ENCODE measurements at regions of chr16 and their contacts with region 1.

Region 1: DNA sequence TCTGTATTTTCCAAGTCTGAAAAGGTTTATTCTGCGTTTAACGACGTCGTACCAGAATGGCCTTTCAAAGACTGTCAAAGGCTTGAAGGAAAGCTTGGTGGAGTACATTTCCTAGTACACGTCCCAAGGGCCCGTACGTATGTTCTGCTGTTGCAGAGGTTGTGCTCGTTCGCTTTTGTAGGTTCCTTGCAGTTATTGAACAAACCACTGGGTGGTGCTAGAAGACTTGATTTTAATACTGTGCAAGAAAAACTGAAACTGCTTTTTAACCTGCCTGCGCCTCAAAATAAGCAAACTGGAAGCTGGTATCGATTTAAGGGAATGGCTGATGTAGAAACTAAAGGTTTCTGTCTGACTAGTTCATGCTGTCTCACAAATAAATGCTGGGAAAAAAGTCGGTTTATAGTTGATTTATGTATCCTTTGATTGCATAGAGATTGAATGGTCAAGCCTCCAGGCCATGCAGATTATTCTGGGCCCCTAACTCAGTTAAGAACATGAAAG is 54.6 kb downstream of the USP10 start:
- DNase-seq: peak; percentile 84
- H3K4me3 ChIP-seq: peak overlapping the region in 2 of 3 experiments; percentile 6 to 34
- H3K27ac ChIP-seq: peak overlapping the region; percentile 85
- H3K4me1 ChIP-seq: peaks cover 35% of the 10 kb centered on the region
- H3K27me3 ChIP-seq: no peaks in the 10 kb centered on the region
- CTCF ChIP-seq: peak; percentile 77 to 80

Region 2: GRCh38 chr16:84925092-84925772 is 170.8 kb after region 1 on chr16:
- CTCF ChIA-PET with region 1: no interaction called
- dilution Hi-C with region 1: no loop called
- in situ Hi-C with region 1: no loop called
- intact Hi-C with region 1: loop called (anchors 1 kb)
- DNase-seq: no peak
- H3K4me3 ChIP-seq: no peak overlapping the region
- H3K27ac ChIP-seq: no peak overlapping the region
- H3K4me1 ChIP-seq: no peaks in the 10 kb centered on the region
- H3K27me3 ChIP-seq: no peaks in the 10 kb centered on the region
- CTCF ChIP-seq: peak; percentile 81 to 92

Measured in mammary epithelial cell (primary cell).